AG04450 (cell line): ENCODE measurements at regions of chr7 and their contacts with region 1.

Region 1: DNA sequence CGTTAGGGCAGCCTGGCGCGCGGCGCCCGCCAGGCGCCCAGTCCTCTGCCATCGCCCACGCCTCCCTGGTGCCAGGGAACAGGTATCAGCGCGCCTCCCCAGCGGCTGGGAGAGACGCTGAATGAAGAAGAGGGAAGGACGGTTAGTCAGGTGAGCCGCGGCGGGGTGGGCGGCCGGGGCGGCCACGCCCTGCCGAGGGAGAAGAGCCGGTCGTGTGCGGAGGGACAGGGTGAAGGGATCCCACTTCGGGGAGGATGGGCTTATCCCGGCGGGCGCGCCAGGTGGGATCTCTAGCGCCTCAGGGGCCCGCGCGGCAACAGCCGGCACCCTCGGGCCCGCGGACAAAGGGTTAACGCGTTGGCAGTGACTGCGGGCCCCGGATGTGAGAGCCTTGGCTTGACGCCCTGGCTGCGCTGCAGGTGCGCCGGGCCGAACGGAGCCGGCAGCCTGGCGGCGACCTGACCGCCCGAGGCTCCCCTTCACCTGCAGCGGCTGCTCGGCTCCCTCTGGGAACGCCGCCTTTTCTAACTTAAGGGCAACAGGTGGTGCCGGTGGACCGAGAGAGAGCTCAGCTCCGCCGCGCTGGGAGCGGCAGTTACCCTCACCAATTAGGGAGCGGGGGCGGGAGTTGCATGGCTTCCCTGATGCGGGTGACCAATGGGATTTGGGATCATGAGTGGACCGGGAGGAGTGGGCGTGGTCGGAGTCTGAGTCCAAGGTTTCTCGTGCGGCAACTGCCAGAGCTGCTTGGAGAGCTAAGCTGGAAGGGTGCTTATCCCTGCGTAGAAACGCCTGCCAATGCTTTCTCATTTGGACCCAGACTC is at the start of gene ARL4A:
- DNase-seq: peak; percentile 96
- H3K4me3 ChIP-seq: peak within 1 kb of the TSS; percentile 88
- H3K27ac ChIP-seq: peak within 1 kb of the TSS; percentile 79
- H3K27me3 ChIP-seq: no peaks in the 10 kb centered on the region
- CTCF ChIP-seq: peak; percentile 29; the same call in 1 of the 2 replicates
- polyA plus RNA-seq, gene ARL4A: 18.3 and 31.0 TPM in 2 replicates

Region 2: DNA sequence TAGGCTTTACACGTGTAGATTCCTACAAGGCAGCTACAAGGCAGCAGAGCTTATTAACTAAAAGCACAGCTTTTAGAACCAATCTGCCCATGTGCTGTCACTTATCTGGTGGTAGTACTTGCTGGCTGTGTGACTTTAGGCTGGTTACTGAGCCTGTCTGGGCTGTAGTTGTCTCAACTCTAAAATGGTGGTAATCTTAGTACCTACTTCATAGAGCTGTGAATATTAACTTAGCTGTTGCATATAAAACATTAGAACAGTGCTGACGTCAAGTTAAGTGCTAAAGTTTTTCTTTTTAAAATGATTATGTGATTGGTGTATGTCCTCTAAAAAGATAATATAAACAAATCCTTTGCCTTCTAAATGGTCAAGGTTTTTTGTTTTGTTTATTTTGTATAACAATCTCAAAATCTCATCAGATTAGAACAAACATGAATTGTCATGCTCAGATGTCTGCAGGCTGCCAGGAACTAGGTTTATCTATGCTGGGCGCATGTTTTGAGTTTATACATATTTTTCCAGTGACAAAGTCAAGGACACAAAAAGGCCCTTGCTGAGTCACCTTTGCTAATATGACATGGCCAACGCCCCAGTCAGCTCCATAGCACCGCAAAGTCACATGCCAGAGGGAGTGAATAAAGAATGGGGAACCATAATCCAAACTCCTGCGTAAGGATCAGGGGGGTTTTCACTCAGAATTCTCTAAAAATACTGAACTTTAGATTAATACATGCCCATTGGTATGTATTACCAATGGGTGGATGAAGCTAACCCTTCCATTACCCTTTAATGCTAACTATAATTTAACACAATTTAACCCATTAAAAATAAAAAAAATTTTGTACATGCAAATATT is 39.5 kb before region 1 on chr7:
- CTCF ChIA-PET with region 1: interaction called, 18 read pairs
- POLR2A ChIA-PET with region 1: no interaction called
- DNase-seq: no peak
- H3K4me3 ChIP-seq: no peak overlapping the region
- H3K27ac ChIP-seq: no peak overlapping the region
- H3K27me3 ChIP-seq: no peaks in the 10 kb centered on the region
- CTCF ChIP-seq: no peak

Region 3: DNA sequence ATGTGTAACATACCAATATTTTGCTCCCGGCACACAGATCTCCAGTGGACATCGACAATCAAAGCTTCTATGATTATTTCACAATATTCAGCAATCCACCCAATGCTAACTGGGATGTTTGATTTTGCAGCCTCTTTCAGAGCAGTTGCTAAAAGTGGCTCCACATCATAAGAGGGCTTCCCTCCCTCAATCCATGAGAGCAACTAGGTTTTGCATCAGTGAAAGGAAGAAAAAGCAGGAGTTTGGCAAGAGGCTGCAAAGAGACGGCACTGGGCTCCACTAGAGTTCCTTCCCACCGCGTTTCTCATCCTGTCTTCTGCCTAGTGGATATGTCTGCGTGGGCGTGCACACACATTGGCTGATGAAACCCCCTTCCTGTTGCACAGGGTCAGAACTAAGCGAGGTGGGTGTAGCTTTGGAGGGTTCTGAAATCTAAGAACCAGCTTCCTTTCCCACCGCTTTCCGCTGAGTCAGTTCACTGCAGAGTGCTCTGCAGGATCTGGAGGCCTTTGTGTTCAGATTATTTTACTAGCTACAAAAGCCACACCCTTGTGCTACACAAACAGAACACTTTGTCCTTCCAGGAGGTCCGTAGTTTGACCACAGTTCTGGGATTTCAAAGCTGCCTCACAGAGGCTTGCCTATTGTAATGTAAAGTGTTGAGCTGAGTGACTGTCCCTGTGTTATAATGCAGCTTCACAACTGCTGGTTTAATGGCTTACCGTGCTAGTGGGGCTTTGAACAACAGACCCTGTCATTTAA is 28.4 kb after region 1 on chr7:
- CTCF ChIA-PET with region 1: interaction called, 17 read pairs
- POLR2A ChIA-PET with region 1: interaction called, 8 read pairs
- DNase-seq: peak; percentile 87
- H3K4me3 ChIP-seq: peak overlapping the region; percentile 39
- H3K27ac ChIP-seq: peak overlapping the region; percentile 85
- H3K27me3 ChIP-seq: no peaks in the 10 kb centered on the region
- CTCF ChIP-seq: no peak

Region 4: GRCh38 chr7:13017333-13017853 is 330.3 kb after region 1 on chr7:
- CTCF ChIA-PET with region 1: interaction called, 14 read pairs
- POLR2A ChIA-PET with region 1: no interaction called
- DNase-seq: peak; percentile 44
- H3K4me3 ChIP-seq: peak overlapping the region; percentile 36
- H3K27ac ChIP-seq: peak overlapping the region; percentile 53
- H3K27me3 ChIP-seq: no peaks in the 10 kb centered on the region
- CTCF ChIP-seq: no peak

Region 5: GRCh38 chr7:13117103-13117502 is 430.0 kb after region 1 on chr7:
- CTCF ChIA-PET with region 1: interaction called, 89 read pairs
- POLR2A ChIA-PET with region 1: no interaction called
- DNase-seq: no peak
- H3K4me3 ChIP-seq: no peak overlapping the region
- H3K27ac ChIP-seq: no peak overlapping the region
- H3K27me3 ChIP-seq: no peaks in the 10 kb centered on the region
- CTCF ChIP-seq: peak; percentile 65

Region 6: GRCh38 chr7:13257661-13258060 is 570.6 kb after region 1 on chr7:
- CTCF ChIA-PET with region 1: interaction called, 104 read pairs
- POLR2A ChIA-PET with region 1: no interaction called
- DNase-seq: no peak
- H3K4me3 ChIP-seq: no peak overlapping the region
- H3K27ac ChIP-seq: no peak overlapping the region
- H3K27me3 ChIP-seq: no peaks in the 10 kb centered on the region
- CTCF ChIP-seq: no peak